Caco-2 (cell line): ENCODE measurements at regions of chr7 and their contacts with region 1.

Region 1: DNA sequence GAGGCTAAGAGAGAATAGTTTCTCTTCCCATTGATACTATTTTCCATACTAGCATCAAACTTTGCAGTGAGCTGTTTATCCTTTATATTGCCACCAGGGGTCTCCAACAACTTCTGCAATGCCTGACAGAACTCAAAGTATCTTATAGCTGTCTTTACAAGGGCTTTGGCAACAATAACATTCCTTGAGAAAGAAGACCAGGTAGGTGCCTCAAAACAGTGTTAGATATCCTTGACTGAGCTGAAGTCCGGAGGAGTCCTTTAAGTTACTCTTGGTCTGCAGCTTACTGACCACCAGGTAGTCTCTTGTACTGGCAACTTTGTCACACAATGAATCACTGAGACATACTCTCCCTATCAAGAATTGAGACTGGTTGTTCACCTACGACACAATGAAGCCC is 30.0 kb upstream of the TES start:
- DNase-seq: peak; percentile 47 to 58
- H3K4me3 ChIP-seq: no peak overlapping the region
- H3K4me3 Mint-ChIP-seq: no peak overlapping the region
- H3K27ac Mint-ChIP-seq: no peak overlapping the region
- H3K4me1 ChIP-seq: no peaks in the 10 kb centered on the region
- H3K4me1 Mint-ChIP-seq: no peaks in the 10 kb centered on the region
- H3K27me3 ChIP-seq: no peaks in the 10 kb centered on the region
- H3K27me3 Mint-ChIP-seq: no peaks in the 10 kb centered on the region
- CTCF ChIP-seq: peak; percentile 73 to 80

Region 2: DNA sequence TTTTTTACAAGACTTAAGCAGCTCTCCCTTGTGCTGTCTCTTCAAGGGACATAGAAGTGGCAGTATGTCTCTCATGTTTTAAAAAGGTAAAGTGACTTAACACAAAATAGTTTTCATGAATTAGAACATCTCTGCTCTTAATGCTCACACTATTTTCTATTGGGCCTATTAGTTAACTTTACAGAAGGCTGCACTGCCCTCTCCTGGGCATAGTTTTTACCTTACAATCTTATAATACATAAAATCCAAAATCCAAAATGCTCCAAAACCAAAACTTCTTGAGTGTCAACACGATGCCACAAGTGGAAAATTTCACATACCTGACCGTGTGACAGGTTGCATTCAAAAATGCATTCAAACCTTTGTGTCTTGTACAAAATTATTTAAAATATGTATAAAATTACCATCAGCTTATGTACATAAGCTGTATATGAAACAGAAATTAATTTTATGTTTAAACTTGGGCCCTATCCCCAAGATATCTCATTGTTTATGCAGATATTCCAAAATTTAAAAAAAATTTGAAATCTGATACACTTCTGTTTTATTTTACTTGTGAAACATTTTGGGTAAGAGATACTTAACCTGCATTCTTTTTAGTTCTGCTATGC is 55.8 kb after region 1 on chr7:
- CTCF ChIA-PET with region 1: interaction called, 32 read pairs
- POLR2A ChIA-PET with region 1: interaction called, 3 read pairs
- intact Hi-C with region 1: loop called (anchors 1 kb)
- DNase-seq: peak in 1 of 2 experiments; percentile 47
- H3K4me3 ChIP-seq: no peak overlapping the region
- H3K4me3 Mint-ChIP-seq: no peak overlapping the region
- H3K27ac Mint-ChIP-seq: no peak overlapping the region
- H3K4me1 ChIP-seq: peaks cover 20% of the 10 kb centered on the region
- H3K4me1 Mint-ChIP-seq: peaks cover 26% of the 10 kb centered on the region
- H3K27me3 ChIP-seq: no peaks in the 10 kb centered on the region
- H3K27me3 Mint-ChIP-seq: no peaks in the 10 kb centered on the region
- CTCF ChIP-seq: peak; percentile 57 to 64

Region 3: GRCh38 chr7:116249708-116250553 is 69.6 kb after region 1 on chr7:
- CTCF ChIA-PET with region 1: no interaction called
- POLR2A ChIA-PET with region 1: no interaction called
- intact Hi-C with region 1: loop called (anchors 1 kb)
- DNase-seq: peak; percentile 42 to 51
- H3K4me3 ChIP-seq: no peak overlapping the region
- H3K4me3 Mint-ChIP-seq: no peak overlapping the region
- H3K27ac Mint-ChIP-seq: no peak overlapping the region
- H3K4me1 ChIP-seq: no peaks in the 10 kb centered on the region
- H3K4me1 Mint-ChIP-seq: no peaks in the 10 kb centered on the region
- H3K27me3 ChIP-seq: no peaks in the 10 kb centered on the region
- H3K27me3 Mint-ChIP-seq: no peaks in the 10 kb centered on the region
- CTCF ChIP-seq: peak; percentile 60 to 65